ENCODE measurements at regions of chrX and their contacts with region 1.

Region 1: DNA sequence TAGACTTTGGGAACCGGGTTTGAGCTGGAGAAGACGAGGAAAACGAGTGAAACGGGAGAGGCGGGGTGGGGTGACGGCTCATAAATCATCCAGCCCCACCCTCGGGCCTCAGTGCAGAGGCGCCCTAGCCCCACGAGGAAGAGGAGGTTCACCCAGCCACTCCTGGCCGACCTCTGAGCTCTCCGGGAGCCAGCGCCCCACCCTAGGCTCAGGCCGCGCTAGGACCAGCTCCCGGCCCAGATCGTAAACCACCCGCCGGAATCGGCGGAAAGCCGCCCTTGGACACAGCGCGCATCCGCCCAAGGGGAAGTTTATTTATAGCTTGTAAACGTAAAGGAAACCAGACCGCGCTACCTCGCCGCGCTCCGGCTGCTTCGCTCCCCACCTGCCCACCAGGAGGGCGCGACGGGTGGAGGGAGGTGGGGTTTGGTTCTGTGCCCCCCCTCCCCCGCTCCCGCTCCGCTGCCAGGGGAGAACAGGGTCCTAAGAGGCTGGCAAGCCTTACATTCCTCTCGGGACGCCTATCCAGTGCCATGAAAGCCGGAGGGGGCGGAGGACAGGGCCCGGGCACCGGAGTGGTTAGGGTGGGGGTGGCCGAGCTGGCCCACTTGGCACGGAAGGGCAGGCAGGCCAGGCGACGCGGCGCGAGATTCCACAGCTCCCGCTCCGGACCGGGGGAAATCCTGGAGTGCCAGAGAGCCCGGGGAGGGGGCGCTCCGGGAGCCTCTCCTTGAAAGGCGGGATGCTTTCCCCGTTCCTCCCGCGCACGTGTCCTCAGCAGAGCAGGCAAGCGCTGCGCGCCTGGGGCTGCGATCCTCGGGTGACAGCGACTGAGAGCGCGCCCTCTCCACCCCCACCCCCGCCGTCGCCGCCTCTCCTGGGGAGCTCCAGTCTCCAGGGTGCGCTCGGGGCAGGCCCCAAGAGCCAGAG is 84.2 kb downstream of the BCOR start:
- DNase-seq: no peak
- ATAC-seq: peak; percentile 37
- H3K4me3 ChIP-seq: peak overlapping the region; percentile 42 to 52
- H3K27ac ChIP-seq: peak overlapping the region; percentile 61
- H3K4me1 ChIP-seq: peaks cover 3% of the 10 kb centered on the region
- H3K27me3 ChIP-seq: no peaks in the 10 kb centered on the region
- CTCF ChIP-seq: no peak

Region 2: DNA sequence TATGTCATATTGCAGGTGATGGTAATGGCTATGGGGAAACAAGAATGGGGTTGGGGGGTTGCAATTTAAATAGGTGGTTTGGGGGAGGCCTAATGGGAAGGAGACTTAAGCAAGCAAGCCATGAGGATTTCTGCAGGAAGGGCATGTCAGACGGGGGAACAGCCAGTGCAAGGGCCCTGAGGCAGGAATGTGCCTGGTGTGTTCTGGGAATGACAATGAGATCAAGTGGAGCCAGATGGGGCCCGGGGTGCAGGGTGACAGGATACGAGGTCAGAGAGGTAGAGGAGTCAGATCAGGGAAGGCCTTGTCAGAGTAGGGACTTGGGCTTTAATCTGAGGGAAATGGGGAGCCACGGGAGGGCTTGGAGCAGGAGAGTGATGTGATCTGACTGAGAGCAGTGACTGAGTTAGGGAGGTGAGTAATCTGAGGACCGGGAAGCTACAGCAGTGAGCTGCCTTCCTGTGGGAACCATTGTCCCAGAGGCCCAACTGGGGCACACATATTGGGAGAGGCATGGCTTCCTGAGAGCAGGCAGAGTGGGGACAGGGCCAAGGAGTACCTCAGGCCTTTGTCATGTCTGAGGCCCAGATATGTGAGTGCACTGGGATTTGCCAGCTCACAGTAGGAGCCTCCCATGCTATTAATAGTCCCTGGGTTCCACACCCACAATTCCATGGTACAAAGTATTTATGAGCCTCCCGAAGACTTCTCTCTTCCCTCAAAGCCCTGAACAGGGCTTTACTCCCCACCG is 55.5 kb before region 1 on chrX:
- CTCF ChIA-PET with region 1: no interaction called
- POLR2A ChIA-PET with region 1: no interaction called
- in situ Hi-C with region 1: no loop called
- intact Hi-C with region 1: loop called (anchors 2 kb)
- DNase-seq: no peak
- ATAC-seq: no peak
- H3K4me3 ChIP-seq: no peak overlapping the region
- H3K27ac ChIP-seq: no peak overlapping the region
- H3K4me1 ChIP-seq: no peaks in the 10 kb centered on the region
- H3K27me3 ChIP-seq: no peaks in the 10 kb centered on the region
- CTCF ChIP-seq: no peak

Region 3: DNA sequence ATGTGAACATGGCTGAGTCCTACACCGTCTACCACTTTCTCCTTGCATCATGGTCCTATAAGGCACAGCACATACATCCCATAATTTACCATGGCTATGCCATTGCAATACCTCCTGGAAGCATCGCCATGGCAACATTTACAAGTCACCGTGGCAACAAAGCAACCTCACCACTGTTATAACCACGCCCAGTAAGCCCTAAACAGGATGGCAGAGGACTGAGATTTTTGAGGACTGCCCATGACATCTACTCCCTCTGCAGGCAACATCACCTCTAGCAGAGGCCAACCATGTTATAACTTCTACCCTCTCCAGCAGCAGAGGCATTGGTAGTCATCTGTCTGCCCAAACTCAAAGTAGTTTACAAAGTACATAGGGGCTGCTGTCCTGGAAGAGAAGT is 54.5 kb after region 1 on chrX:
- CTCF ChIA-PET with region 1: no interaction called
- POLR2A ChIA-PET with region 1: no interaction called
- in situ Hi-C with region 1: no loop called
- intact Hi-C with region 1: no loop called
- DNase-seq: no peak
- ATAC-seq: peak; percentile 28; the same call in 1 of the 2 replicates
- H3K4me3 ChIP-seq: no peak overlapping the region
- H3K27ac ChIP-seq: no peak overlapping the region
- H3K4me1 ChIP-seq: peaks cover 3% of the 10 kb centered on the region; the same call in 1 of the 2 replicates
- H3K27me3 ChIP-seq: no peaks in the 10 kb centered on the region
- CTCF ChIP-seq: no peak